Activated naive CD8-positive, alpha-beta T cell treated with anti-CD3 and anti-CD28 coated beads, Interleukin-2, amount 10 ng/mL, durations not matched to agents 7 days and 5 days (primary cell): ENCODE measurements at regions of chr6 and their contacts with region 1.

Region 1: GRCh38 chr6:45377554-45378333 is at the start of gene SUPT3H:
- DNase-seq: peak; percentile 96
- ATAC-seq: peak; percentile 87
- H3K4me3 Mint-ChIP-seq: peak within 1 kb of the TSS; percentile 99
- H3K27ac Mint-ChIP-seq: peak within 1 kb of the TSS; percentile 97
- H3K4me1 Mint-ChIP-seq: peaks cover 23% of the 10 kb centered on the region
- H3K27me3 Mint-ChIP-seq: no peaks in the 10 kb centered on the region
- total RNA-seq, gene SUPT3H: 10.1 to 11.6 TPM

Region 2: DNA sequence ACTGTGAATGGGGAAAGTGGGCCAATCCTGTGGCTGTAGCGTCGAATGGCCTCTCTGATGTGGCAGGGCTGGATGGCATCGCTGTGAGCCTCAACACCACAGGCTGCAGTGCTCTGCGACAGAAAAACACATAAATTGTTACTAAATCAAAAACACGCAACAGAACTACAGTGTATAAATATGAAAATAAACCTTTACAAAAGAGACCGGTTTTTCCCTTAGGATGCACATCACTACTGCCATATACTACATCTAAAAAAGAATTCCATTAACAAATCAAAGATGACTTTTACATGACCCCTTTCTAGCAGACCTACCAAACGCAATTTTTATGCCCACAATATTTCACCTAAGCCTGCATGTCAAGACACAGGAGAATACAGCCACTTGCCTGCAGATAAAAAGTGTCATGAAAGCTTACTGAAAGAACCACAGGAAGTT is 445.1 kb before region 1 on chr6:
- POLR2A ChIA-PET with region 1: interaction called, 11 read pairs
- DNase-seq: peak; percentile 56
- ATAC-seq: peak; percentile 78
- H3K4me3 Mint-ChIP-seq: peak overlapping the region; percentile 83
- H3K27ac Mint-ChIP-seq: peak overlapping the region; percentile 93
- H3K4me1 Mint-ChIP-seq: peaks cover 34% of the 10 kb centered on the region
- H3K27me3 Mint-ChIP-seq: no peaks in the 10 kb centered on the region

Region 3: DNA sequence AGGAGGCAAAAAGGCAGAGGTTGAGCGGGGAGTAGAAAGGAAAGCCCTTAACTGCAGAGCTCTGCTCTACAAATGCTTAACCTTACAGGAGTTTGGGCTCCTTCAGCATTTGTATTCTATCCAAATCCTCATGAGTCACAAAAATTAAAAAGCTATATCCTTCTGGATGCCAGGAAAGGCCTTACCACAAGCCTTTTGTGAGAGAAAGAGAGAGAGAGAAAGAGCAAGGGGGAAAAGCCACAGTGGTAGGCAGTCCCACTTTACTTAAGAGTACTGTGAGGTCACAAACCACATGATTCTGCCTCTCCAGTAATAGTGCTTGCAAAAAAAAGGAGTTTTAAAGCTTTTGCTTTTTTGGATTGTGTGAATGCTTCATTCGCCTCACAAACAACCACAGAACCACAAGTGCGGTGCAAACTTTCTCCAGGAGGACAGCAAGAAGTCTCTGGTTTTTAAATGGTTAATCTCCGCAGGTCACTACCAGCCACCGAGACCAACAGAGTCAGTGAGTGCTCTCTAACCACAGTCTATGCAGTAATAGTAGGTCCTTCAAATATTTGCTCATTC is 49.7 kb before region 1 on chr6 and contains the start of gene RUNX2:
- POLR2A ChIA-PET with region 1: interaction called, 13 read pairs
- DNase-seq: peak; percentile 36
- ATAC-seq: peak; percentile 78
- H3K4me3 Mint-ChIP-seq: peak within 1 kb of the TSS; percentile 84
- H3K27ac Mint-ChIP-seq: peak within 1 kb of the TSS; percentile 82
- H3K4me1 Mint-ChIP-seq: peaks cover 52% of the 10 kb centered on the region
- H3K27me3 Mint-ChIP-seq: no peaks in the 10 kb centered on the region
- total RNA-seq, gene RUNX2: 5.1 to 6.3 TPM